PC-3 (cell line): ENCODE measurements at regions of chr5 and their contacts with region 1.

Region 1: GRCh38 chr5:163825661-163826060 is 320.2 kb downstream of the MAT2B start:
- DNase-seq: no peak
- ATAC-seq: no peak
- H3K4me3 ChIP-seq: no peak overlapping the region
- H3K27ac ChIP-seq: no peak overlapping the region
- H3K4me1 ChIP-seq: no peaks in the 10 kb centered on the region
- H3K27me3 ChIP-seq: no peaks in the 10 kb centered on the region
- CTCF ChIP-seq: no peak

Region 2: DNA sequence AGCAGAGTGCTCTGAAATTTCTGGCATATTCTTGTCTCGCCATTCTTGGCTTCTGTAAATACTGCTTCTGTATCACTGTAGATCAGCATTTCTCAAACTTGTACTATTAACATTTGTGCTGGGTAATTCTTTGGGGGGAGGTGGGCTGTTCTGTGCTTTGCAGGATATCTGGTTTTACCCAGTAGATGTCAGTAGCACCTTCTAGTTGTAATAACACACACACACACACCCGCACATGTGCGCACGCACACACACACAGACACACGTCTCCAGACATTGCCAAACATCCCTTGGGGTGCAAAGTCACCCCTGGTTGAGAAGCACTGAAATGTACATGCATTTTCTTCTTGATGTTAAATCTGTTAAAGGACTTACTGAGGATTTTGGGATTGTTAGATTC is 16.2 kb before region 1 on chr5:
- CTCF ChIA-PET with region 1: no interaction called
- POLR2A ChIA-PET with region 1: no interaction called
- intact Hi-C with region 1: loop called (anchors 1 kb)
- DNase-seq: no peak
- ATAC-seq: no peak
- H3K4me3 ChIP-seq: no peak overlapping the region
- H3K27ac ChIP-seq: no peak overlapping the region
- H3K4me1 ChIP-seq: no peaks in the 10 kb centered on the region
- H3K27me3 ChIP-seq: no peaks in the 10 kb centered on the region
- CTCF ChIP-seq: no peak

Region 3: GRCh38 chr5:163963881-163964280 is 138.2 kb after region 1 on chr5:
- CTCF ChIA-PET with region 1: no interaction called
- POLR2A ChIA-PET with region 1: no interaction called
- intact Hi-C with region 1: no loop called
- DNase-seq: no peak
- ATAC-seq: no peak
- H3K4me3 ChIP-seq: no peak overlapping the region
- H3K27ac ChIP-seq: no peak overlapping the region
- H3K4me1 ChIP-seq: no peaks in the 10 kb centered on the region
- H3K27me3 ChIP-seq: no peaks in the 10 kb centered on the region
- CTCF ChIP-seq: no peak